Mammary epithelial cell (primary cell): ENCODE measurements at regions of chr19 and their contacts with region 1.

Region 1: DNA sequence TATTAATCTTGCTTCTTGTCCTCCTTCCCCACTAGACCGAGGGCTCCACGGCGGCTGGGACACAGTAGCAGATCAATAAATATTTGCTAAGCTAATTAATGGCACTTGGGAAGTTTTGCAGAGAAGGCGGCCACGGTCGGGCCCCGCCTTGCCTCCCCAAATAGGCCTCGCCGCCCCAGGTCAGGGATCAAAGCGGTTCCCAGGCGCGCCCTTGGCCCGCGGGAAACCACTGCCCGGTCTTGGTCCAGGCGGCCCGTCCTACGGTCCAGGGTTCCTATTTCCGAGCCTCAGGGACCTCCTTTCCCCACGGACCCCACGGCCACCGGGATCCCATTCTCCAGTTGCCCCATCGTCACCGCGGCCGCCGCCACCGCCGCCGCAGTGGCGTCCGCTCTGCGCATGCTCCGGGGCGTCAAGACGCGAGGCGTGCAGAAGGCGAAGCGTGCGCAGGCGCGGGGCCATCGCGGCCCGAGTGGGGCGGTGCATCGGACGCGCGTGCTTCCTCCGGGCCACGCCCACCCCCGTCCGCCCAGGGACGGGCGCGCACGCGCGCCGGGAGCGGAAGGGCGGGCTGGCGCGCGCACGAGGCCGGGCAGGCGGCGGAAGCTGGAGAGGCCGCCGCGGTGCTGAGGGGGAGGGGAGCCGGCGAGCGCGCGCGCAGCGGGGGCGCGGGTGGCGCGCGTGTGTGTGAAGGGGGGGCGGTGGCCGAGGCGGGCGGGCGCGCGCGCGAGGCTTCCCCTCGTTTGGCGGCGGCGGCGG is at the start of gene SMARCA4:
- DNase-seq: peak; percentile 95
- H3K4me3 ChIP-seq: peak within 1 kb of the TSS; percentile 80 to 92 (median 88)
- H3K27ac ChIP-seq: peak within 1 kb of the TSS; percentile 66
- H3K4me1 ChIP-seq: peaks cover 2% of the 10 kb centered on the region
- H3K27me3 ChIP-seq: no peaks in the 10 kb centered on the region
- CTCF ChIP-seq: no peak
- total RNA-seq, gene SMARCA4: 67.0 to 110 TPM

Region 2: GRCh38 chr19:10667867-10668266 is 292.6 kb before region 1 on chr19:
- CTCF ChIA-PET with region 1: no interaction called
- dilution Hi-C with region 1: loop called (anchors 5 kb)
- in situ Hi-C with region 1: no loop called
- intact Hi-C with region 1: no loop called
- DNase-seq: no peak
- H3K4me3 ChIP-seq: no peak overlapping the region
- H3K27ac ChIP-seq: no peak overlapping the region
- H3K4me1 ChIP-seq: peaks cover 1% of the 10 kb centered on the region
- H3K27me3 ChIP-seq: no peaks in the 10 kb centered on the region
- CTCF ChIP-seq: no peak

Region 3: DNA sequence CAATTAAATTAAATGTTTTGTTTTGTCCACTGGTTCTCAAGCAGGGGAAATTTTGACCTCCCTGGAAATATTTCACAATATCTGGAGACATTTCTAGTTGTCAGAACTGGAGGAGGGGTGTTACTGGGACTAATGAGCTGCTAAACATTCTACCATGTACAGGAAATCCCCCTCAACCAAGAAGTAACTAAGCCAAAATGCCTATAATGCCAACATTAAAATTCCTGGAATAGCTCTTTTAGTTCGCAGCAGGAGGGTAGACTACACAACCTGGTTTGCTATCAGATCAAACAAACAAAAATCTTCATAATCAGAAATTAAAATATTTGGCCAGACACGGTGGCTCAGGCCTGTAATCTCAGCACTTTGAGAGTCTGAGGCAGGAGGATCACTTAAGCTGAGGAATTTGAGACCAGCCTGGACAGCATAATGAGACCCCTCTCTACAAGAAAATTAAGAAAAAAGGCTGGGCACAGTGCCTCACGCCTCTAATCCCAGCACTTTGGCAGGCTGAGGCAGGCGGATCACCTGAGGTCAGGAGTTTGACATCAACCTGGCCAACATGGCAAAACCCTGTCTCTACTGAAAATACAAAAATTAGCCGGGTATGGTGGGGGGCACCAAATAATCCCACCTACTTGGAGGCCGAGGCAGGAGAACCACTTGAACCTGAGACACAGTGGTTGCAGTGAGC is 13.4 kb before region 1 on chr19:
- CTCF ChIA-PET with region 1: no interaction called
- dilution Hi-C with region 1: no loop called
- in situ Hi-C with region 1: no loop called
- intact Hi-C with region 1: loop called (anchors 1 kb)
- DNase-seq: no peak
- H3K4me3 ChIP-seq: no peak overlapping the region
- H3K27ac ChIP-seq: no peak overlapping the region
- H3K4me1 ChIP-seq: no peaks in the 10 kb centered on the region
- H3K27me3 ChIP-seq: no peaks in the 10 kb centered on the region
- CTCF ChIP-seq: no peak

Region 4: DNA sequence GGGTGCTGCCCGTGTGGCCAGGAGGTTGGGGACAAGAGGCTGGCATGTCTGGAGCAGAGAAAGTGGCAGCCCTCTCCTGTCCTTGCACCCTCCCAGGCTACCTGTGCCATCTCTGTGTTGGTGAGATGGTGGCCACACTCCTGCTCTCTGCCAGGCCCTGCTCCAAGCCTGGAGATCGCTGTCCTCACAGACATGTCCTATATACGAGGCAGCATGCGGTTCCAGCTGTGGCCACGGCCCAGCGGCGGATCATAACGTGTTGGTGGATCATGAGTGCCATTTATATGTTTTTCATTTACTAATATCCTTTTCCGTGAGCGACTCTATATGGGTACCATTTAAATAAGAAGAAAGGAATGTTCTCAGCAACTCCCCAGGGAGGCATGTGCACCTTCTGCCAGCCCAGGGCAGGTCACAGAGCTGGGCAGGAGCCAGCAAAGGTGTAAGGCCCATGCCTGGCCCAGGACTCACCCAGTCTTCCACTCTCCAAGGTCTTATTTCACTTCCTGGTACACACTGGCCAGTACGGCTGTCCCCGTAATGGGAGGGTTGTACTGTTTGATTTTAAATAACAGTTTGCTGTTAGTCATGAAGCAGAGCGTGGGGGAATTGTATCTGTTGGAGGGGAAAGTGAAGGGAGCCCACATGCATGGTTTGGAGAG is 81.6 kb after region 1 on chr19:
- CTCF ChIA-PET with region 1: no interaction called
- dilution Hi-C with region 1: no loop called
- in situ Hi-C with region 1: no loop called
- intact Hi-C with region 1: no loop called
- DNase-seq: no peak
- H3K4me3 ChIP-seq: no peak overlapping the region
- H3K27ac ChIP-seq: no peak overlapping the region
- H3K4me1 ChIP-seq: no peaks in the 10 kb centered on the region
- H3K27me3 ChIP-seq: no peaks in the 10 kb centered on the region
- CTCF ChIP-seq: no peak

Region 5: GRCh38 chr19:11064831-11065303 is 104.4 kb after region 1 on chr19:
- CTCF ChIA-PET with region 1: no interaction called
- dilution Hi-C with region 1: loop called (anchors 5 kb)
- in situ Hi-C with region 1: no loop called
- intact Hi-C with region 1: no loop called
- DNase-seq: no peak
- H3K4me3 ChIP-seq: no peak overlapping the region
- H3K27ac ChIP-seq: no peak overlapping the region
- H3K4me1 ChIP-seq: no peaks in the 10 kb centered on the region
- H3K27me3 ChIP-seq: no peaks in the 10 kb centered on the region
- CTCF ChIP-seq: no peak